Right lobe of liver (tissue), 6 donors: ENCODE measurements at regions of chr10 and their contacts with region 1.

Region 1: DNA sequence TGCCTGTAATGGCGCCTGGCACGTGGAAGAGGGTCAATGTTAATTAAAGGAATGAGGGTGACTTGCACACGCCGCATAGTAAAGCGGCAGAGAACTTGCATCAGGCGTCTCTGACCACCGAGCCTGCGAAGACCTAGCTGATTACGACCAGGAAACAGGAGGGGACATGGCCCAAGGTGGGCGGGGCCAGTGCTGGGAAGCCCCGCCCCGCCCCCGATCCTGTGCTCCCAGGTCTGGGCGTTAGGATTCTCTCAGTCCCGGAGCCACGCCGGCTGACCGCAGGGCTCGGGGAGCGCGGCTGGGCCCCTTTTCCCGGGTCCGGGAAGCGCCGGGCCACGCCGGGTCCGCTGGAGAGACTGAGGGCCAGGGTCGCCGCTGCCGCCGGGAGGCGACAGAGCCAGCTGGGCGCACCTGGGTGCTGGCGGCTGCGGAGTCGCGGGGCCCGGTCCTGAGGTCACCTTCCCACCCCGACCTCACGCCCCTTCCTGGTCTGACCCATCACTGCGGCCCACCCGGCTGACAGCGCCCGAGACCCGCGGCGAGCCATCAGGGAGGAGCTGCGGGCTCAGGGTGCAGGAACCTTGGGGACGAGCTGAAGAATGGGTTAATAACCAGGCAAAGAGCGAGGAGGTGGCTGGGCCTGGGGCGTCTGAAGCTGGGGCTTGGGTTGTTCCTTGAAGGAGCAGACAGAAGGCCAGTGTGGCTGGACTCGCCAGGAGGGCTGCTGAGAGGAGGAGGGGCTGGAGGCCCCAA is 23.0 kb upstream of the GRID1 start:
- DNase-seq: peak in 2 of 3 donors; percentile 55 to 66
- ATAC-seq: peak; percentile 85 to 95 (median 92)
- H3K4me3 ChIP-seq: peak overlapping the region; percentile 21 to 45 (median 26)
- H3K27ac ChIP-seq: no peak overlapping the region
- H3K4me1 ChIP-seq: no peaks in the 10 kb centered on the region
- H3K27me3 ChIP-seq: no peaks in the 10 kb centered on the region
- CTCF ChIP-seq: no peak
- POLR2A ChIP-seq: no peak

Region 2: DNA sequence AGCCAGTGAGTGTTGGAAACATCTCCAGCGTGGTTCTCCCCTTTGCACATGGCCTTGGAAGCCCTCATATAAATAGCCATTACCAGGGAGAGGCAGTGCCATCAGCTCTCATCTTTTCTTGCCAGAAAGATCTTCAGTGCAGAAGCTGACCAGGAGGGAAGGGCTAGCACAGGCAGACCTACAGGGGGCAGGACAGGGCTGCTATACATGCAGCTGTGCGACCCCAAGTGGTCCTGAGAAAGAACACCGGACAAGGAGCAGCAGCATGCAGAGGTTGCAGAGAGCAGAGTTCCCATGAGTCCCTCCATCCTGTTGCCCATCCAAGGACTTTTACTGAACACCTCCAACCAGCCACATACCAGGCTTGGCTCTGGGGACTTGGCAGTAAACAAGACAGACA is 40.1 kb before region 1 on chr10:
- intact Hi-C with region 1: no loop called
- DNase-seq: peak in 2 of 3 donors; percentile 6 to 7
- ATAC-seq: no peak
- H3K4me3 ChIP-seq: no peak overlapping the region
- H3K27ac ChIP-seq: no peak overlapping the region
- H3K4me1 ChIP-seq: no peaks in the 10 kb centered on the region
- H3K27me3 ChIP-seq: no peaks in the 10 kb centered on the region
- CTCF ChIP-seq: no peak
- POLR2A ChIP-seq: no peak

Region 3: GRCh38 chr10:86585037-86585725 is 195.6 kb after region 1 on chr10:
- intact Hi-C with region 1: loop called in 1 of 2 experiments (anchors 5 kb)
- DNase-seq: peak; percentile 69 to 74 (median 72)
- ATAC-seq: peak; percentile 97 to 99 (median 98)
- H3K4me3 ChIP-seq: no peak overlapping the region
- H3K27ac ChIP-seq: no peak overlapping the region
- H3K4me1 ChIP-seq: no peaks in the 10 kb centered on the region
- H3K27me3 ChIP-seq: no peaks in the 10 kb centered on the region
- CTCF ChIP-seq: peak; percentile 97 to 99 (median 98)
- POLR2A ChIP-seq: no peak